ENCODE measurements at regions of chr11 and their contacts with region 1.

Region 1: GRCh38 chr11:60528465-60528864 is 13.3 kb downstream of the MS4A13 start:
- DNase-seq: no peak
- H3K4me3 ChIP-seq: no peak overlapping the region
- H3K27ac ChIP-seq: no peak overlapping the region
- H3K4me1 ChIP-seq: no peaks in the 10 kb centered on the region
- H3K27me3 ChIP-seq: no peaks in the 10 kb centered on the region
- CTCF ChIP-seq: no peak
- EP300 ChIP-seq: no peak
- POLR2A ChIP-seq: no peak

Region 2: DNA sequence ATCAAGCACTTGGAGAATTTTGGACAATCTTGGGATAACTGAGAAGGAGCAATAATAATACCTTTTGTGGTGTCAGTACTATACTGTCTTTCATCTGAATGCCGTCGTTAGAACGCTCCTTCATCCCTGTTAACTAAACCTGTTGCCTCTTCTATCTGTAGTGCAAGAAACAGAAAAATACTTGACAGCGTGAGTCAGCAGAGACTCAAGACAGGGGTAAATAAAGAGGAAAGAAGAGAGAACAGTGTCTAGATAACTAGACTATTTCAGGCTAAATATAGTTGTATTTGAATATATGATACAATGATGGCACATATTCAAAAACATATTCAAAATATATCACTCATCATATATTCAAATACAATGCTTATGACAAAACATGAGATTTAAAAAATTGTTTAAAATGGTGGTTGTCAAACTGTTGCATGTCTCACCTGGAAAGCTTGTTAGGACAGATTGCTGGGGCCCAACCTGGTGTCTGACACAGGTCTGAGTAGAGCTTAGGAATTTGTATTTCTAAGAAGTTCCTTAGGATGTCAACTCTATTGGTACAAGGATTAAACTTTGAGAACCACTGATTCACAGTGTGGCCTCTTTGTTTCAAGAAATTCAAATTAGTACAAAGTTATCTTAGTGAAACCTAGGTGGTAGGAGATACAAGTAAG is 547.2 kb before region 1 on chr11:
- in situ Hi-C with region 1: no loop called
- intact Hi-C with region 1: no loop called
- DNase-seq: no peak
- H3K4me3 ChIP-seq: no peak overlapping the region
- H3K27ac ChIP-seq: no peak overlapping the region
- H3K4me1 ChIP-seq: no peaks in the 10 kb centered on the region
- H3K27me3 ChIP-seq: no peaks in the 10 kb centered on the region
- CTCF ChIP-seq: no peak
- EP300 ChIP-seq: no peak
- POLR2A ChIP-seq: no peak

Region 3: GRCh38 chr11:60257956-60258722 is 270.3 kb before region 1 on chr11:
- in situ Hi-C with region 1: no loop called
- intact Hi-C with region 1: loop called (anchors 5 kb)
- DNase-seq: no peak
- H3K4me3 ChIP-seq: no peak overlapping the region
- H3K27ac ChIP-seq: no peak overlapping the region
- H3K4me1 ChIP-seq: no peaks in the 10 kb centered on the region
- H3K27me3 ChIP-seq: no peaks in the 10 kb centered on the region
- CTCF ChIP-seq: no peak
- EP300 ChIP-seq: no peak
- POLR2A ChIP-seq: no peak

Region 4: GRCh38 chr11:60477035-60477445 is 51.4 kb before region 1 on chr11:
- in situ Hi-C with region 1: no loop called
- intact Hi-C with region 1: loop called (anchors 2 kb)
- DNase-seq: no peak
- H3K4me3 ChIP-seq: no peak overlapping the region
- H3K27ac ChIP-seq: no peak overlapping the region
- H3K4me1 ChIP-seq: no peaks in the 10 kb centered on the region
- H3K27me3 ChIP-seq: no peaks in the 10 kb centered on the region
- CTCF ChIP-seq: no peak
- EP300 ChIP-seq: peak; percentile 10
- POLR2A ChIP-seq: no peak

Region 5: GRCh38 chr11:60821827-60822599 is 293.5 kb after region 1 on chr11:
- in situ Hi-C with region 1: no loop called
- intact Hi-C with region 1: no loop called
- DNase-seq: no peak
- H3K4me3 ChIP-seq: no peak overlapping the region
- H3K27ac ChIP-seq: no peak overlapping the region
- H3K4me1 ChIP-seq: no peaks in the 10 kb centered on the region
- H3K27me3 ChIP-seq: no peaks in the 10 kb centered on the region
- CTCF ChIP-seq: no peak
- EP300 ChIP-seq: no peak
- POLR2A ChIP-seq: no peak